ENCODE measurements at regions of chr5 and their contacts with region 1.

Region 1: DNA sequence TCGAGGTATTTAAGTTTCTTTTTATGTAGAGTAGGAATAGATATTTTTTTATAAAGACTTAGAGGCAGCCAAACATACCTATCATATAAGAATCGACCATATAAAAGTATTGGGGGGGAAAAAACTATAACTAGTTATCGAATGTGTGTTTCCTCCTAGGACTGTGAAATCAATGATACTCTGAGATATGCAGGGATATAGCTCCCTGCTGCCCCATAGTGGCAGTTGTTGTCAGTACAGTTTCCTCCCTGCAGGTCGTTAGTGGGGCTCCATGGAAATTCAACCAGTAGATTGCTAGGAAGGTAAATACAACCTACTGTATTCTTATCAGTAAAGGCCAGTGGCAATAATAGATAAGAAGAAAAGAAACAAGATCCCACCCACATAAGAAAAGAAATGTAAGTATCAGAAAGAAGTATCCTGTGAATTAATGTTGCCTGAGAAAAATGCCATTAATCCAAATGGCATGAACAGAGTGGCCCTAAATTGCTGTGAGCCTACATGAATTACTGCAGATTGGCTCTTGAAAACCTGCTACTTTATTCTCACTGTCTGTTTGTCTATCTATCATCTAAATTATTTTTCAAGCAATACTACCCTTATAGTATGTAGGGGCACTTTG is 136.9 kb upstream of the FBN2 start:
- DNase-seq: no peak
- H3K4me3 ChIP-seq: no peak overlapping the region
- H3K27ac ChIP-seq: no peak overlapping the region
- H3K4me1 ChIP-seq: peaks cover 0 to 12% (median 3%) of the 10 kb centered on the region in 4 donors
- H3K27me3 ChIP-seq: no peaks in the 10 kb centered on the region
- CTCF ChIP-seq: peak; percentile 49 to 59 (median 52)
- EP300 ChIP-seq: no peak
- POLR2A ChIP-seq: no peak

Region 2: DNA sequence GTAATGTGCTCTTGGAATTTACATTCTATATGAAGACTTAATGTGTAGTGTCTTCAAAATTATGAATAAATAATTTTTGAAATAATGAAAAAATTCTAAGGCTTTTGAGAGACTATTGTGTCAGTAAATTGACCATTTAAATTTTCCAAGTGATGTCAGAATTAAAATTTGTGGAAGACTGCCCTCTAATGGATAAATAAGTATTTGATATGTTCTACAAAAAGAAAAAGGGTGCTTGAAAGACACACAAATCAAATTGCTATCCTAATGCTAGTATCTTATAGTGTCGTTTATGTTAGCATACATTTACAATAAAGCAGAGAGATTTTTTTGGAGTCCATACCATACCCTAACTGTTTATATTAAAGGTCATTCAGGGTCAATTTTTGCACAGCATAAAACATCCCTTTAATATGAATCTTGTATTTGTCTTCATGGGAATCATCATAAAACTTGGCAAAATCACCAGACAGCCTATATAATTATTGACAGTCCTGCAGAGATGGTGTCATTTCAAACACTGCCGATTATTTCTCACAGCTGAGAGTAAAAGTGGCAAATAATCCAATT is 169.5 kb after region 1 on chr5:
- intact Hi-C with region 1: loop called (anchors 10 kb)
- DNase-seq: no peak
- H3K4me3 ChIP-seq: no peak overlapping the region
- H3K27ac ChIP-seq: no peak overlapping the region
- H3K4me1 ChIP-seq: no peaks in the 10 kb centered on the region
- H3K27me3 ChIP-seq: no peaks in the 10 kb centered on the region
- CTCF ChIP-seq: peak; percentile 39 to 47 (median 43)
- EP300 ChIP-seq: no peak
- POLR2A ChIP-seq: no peak

Measured in esophagus muscularis mucosa (tissue), 4 donors.